MCF 10A (cell line): ENCODE measurements at regions of chr1 and their contacts with region 1.

Region 1: GRCh38 chr1:223411309-223411708 is 18.1 kb downstream of the CCDC185 start:
- DNase-seq: no peak
- H3K4me3 Mint-ChIP-seq: no peak overlapping the region
- H3K27ac Mint-ChIP-seq: no peak overlapping the region
- H3K4me1 Mint-ChIP-seq: no peaks in the 10 kb centered on the region
- H3K27me3 Mint-ChIP-seq: no peaks in the 10 kb centered on the region
- CTCF ChIP-seq: no peak

Region 2: GRCh38 chr1:222654849-222655248 is 756.5 kb before region 1 on chr1:
- CTCF ChIA-PET with region 1: no interaction called
- POLR2A ChIA-PET with region 1: no interaction called
- intact Hi-C with region 1: no loop called
- DNase-seq: no peak
- H3K4me3 Mint-ChIP-seq: no peak overlapping the region
- H3K27ac Mint-ChIP-seq: peak overlapping the region; percentile 1
- H3K4me1 Mint-ChIP-seq: no peaks in the 10 kb centered on the region
- H3K27me3 Mint-ChIP-seq: no peaks in the 10 kb centered on the region
- CTCF ChIP-seq: no peak

Region 3: DNA sequence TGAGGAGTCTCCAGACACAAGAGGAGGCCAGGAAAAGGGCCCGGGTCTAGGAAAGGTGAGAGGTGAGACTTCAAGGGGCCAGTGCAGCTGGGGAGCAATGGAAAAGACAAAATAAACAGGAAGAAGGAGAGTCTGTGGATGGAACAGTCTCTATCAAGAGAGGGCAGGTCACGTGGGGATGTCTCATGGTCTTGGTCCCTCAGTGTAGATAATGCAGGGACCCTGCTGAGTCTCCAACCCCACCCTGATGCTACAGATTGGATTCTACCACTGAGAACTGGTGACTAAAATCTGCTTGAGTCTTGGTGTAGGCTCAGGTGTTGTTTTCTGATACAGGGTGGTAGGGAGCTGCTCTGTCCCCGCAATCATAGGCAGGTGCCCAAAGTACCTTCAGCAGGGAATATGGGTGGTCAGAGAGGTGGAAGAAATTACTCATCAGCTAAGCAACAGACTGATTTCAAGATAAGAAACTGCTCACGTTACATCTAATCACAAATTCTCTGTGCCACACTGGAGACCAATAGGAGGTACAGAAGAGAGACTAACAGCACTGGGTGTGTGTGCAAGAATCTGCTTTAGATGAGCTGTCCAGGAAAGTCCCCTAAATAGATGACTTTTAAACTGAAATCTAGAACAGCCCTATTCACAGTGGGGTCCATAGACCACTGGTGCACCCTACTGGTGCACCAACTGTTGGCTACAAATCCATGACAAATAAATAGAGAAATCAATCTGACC is 166.8 kb before region 1 on chr1:
- CTCF ChIA-PET with region 1: no interaction called
- POLR2A ChIA-PET with region 1: no interaction called
- intact Hi-C with region 1: no loop called
- DNase-seq: peak; percentile 36
- H3K4me3 Mint-ChIP-seq: no peak overlapping the region
- H3K27ac Mint-ChIP-seq: no peak overlapping the region
- H3K4me1 Mint-ChIP-seq: peaks cover 7% of the 10 kb centered on the region
- H3K27me3 Mint-ChIP-seq: no peaks in the 10 kb centered on the region
- CTCF ChIP-seq: no peak

Region 4: GRCh38 chr1:223423641-223424233 is 12.4 kb after region 1 on chr1:
- CTCF ChIA-PET with region 1: interaction called, 17 read pairs
- POLR2A ChIA-PET with region 1: interaction called, 11 read pairs
- intact Hi-C with region 1: no loop called
- DNase-seq: peak; percentile 48
- H3K4me3 Mint-ChIP-seq: no peak overlapping the region
- H3K27ac Mint-ChIP-seq: no peak overlapping the region
- H3K4me1 Mint-ChIP-seq: peaks cover 25% of the 10 kb centered on the region
- H3K27me3 Mint-ChIP-seq: no peaks in the 10 kb centered on the region
- CTCF ChIP-seq: no peak

Region 5: DNA sequence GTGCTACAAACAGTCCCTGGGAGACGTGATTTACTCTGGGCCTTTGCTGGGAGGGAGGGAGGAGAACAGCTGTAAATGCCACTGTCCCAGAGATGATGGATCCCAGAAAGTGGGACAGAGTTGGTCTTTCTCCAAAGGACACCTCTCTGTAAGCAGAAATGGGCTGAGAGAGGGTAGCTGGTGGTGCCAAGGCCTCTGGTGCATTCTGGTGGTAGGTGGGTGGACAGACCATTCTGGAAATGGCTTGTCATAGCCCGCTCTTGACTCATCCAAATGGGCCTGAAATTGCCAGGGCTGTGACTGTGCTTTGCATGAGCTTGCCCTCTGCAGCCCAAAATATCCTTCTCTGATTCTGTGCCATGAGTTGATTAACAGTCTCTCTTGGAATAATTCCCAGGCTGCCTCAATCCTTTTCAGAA is 18.0 kb after region 1 on chr1:
- CTCF ChIA-PET with region 1: interaction called, 17 read pairs
- POLR2A ChIA-PET with region 1: interaction called, 11 read pairs
- intact Hi-C with region 1: no loop called
- DNase-seq: peak; percentile 95
- H3K4me3 Mint-ChIP-seq: no peak overlapping the region
- H3K27ac Mint-ChIP-seq: no peak overlapping the region
- H3K4me1 Mint-ChIP-seq: peaks cover 14% of the 10 kb centered on the region
- H3K27me3 Mint-ChIP-seq: no peaks in the 10 kb centered on the region
- CTCF ChIP-seq: no peak